Mammary epithelial cell (primary cell): ENCODE measurements at regions of chr7 and their contacts with region 1.

Region 1: GRCh38 chr7:106461993-106462859 is 177.4 kb upstream of the NAMPT start:
- DNase-seq: peak; percentile 50
- H3K4me3 ChIP-seq: no peak overlapping the region
- H3K27ac ChIP-seq: no peak overlapping the region
- H3K4me1 ChIP-seq: peaks cover 22% of the 10 kb centered on the region
- H3K27me3 ChIP-seq: no peaks in the 10 kb centered on the region
- CTCF ChIP-seq: peak; percentile 39 to 52

Region 2: DNA sequence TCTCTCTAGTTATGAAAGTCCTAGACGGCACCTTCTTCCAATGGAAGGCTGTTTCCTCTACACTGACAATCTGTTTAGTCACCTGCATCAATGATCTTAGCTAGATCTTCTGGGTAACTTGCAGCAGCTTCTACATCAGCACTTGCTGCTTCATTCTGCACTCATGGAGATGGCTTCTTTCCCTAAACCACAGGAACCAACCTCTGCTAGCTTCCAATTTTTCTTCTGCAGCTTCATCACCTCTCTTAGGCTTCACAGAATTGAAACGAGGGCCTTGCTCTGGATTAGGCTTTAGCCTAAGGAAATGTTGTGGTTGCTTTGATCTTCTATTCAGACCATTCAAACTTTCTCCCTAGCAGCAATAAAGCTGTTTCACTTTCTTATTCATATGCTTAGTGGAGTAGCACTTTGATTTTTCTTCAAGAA is 202.1 kb before region 1 on chr7:
- CTCF ChIA-PET with region 1: no interaction called
- dilution Hi-C with region 1: no loop called
- in situ Hi-C with region 1: loop called in 1 of 2 experiments (anchors 10 kb)
- intact Hi-C with region 1: no loop called
- DNase-seq: no peak
- H3K4me3 ChIP-seq: no peak overlapping the region
- H3K27ac ChIP-seq: no peak overlapping the region
- H3K4me1 ChIP-seq: no peaks in the 10 kb centered on the region
- H3K27me3 ChIP-seq: no peaks in the 10 kb centered on the region
- CTCF ChIP-seq: no peak

Region 3: GRCh38 chr7:106285051-106285854 is 177.0 kb before region 1 on chr7:
- CTCF ChIA-PET with region 1: interaction called, 7 read pairs
- dilution Hi-C with region 1: no loop called
- in situ Hi-C with region 1: no loop called
- intact Hi-C with region 1: loop called (anchors 1 kb)
- DNase-seq: peak; percentile 100
- H3K4me3 ChIP-seq: peak overlapping the region; percentile 50 to 93 (median 60)
- H3K27ac ChIP-seq: peak overlapping the region; percentile 98
- H3K4me1 ChIP-seq: peaks cover 17% of the 10 kb centered on the region
- H3K27me3 ChIP-seq: no peaks in the 10 kb centered on the region
- CTCF ChIP-seq: no peak

Region 4: DNA sequence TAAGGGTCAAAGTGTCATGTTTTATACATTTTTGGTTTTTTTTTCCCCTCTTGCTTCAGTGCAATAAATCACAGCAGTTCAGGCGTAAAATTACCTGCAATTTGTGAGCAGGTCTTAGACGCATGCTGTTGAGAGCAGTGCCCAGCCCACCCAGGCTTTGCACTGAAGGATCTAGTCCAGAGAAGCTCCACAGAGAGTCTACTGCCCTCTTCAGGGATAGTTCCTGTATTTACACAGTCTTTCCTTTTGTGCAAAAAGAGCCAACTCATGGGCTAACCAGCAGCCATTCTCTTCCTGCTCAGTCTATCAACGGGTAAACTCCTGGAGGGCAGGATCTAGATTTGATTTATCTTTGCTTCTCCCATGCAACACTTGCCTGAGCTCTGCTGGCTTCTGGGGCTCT is 95.2 kb before region 1 on chr7:
- CTCF ChIA-PET with region 1: interaction called, 33 read pairs
- dilution Hi-C with region 1: no loop called
- in situ Hi-C with region 1: no loop called
- intact Hi-C with region 1: loop called (anchors 2 kb)
- DNase-seq: no peak
- H3K4me3 ChIP-seq: no peak overlapping the region
- H3K27ac ChIP-seq: no peak overlapping the region
- H3K4me1 ChIP-seq: peaks cover 3% of the 10 kb centered on the region
- H3K27me3 ChIP-seq: no peaks in the 10 kb centered on the region
- CTCF ChIP-seq: peak; percentile 17 to 51

Region 5: GRCh38 chr7:106392590-106392989 is 69.6 kb before region 1 on chr7:
- CTCF ChIA-PET with region 1: no interaction called
- dilution Hi-C with region 1: no loop called
- in situ Hi-C with region 1: no loop called
- intact Hi-C with region 1: no loop called
- DNase-seq: peak; percentile 43
- H3K4me3 ChIP-seq: no peak overlapping the region
- H3K27ac ChIP-seq: no peak overlapping the region
- H3K4me1 ChIP-seq: no peaks in the 10 kb centered on the region
- H3K27me3 ChIP-seq: no peaks in the 10 kb centered on the region
- CTCF ChIP-seq: no peak

Region 6: DNA sequence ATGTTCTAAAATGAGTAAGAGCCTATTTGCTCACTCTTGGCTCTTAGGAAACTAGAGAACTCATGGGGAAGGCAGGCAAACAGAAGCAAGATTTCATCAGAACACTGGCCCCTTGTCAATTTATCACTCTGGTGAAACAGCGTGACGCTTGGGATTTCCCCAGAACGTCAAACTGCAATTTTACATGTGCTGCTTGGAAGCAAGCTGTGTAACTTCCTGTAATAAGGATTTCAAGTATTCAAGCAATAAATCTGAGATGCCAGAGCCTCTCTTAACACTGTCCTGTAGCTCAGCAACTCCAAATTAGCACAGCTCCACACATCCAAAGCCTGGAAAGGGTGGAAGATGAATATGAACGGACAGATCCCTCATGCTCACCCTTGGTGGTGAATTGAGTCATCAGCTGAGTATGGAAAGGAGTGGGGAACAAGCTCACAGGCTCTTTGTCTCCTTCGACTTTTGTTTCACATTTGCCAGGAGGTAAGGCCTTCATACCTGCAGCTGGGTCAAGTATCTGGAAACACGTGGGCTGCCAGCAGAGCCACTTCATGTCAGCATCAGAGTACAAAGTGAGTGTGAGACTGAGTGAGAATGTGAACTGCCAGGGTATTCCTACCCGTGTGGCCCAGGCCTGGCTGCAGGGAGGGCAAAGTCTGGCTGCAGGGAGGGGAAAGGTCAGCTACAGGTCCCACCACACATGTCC is 37.1 kb before region 1 on chr7:
- CTCF ChIA-PET with region 1: interaction called, 5 read pairs
- dilution Hi-C with region 1: no loop called
- in situ Hi-C with region 1: no loop called
- intact Hi-C with region 1: loop called (anchors 1 kb)
- DNase-seq: peak; percentile 99
- H3K4me3 ChIP-seq: peak overlapping the region in 1 of 3 experiments; percentile 23
- H3K27ac ChIP-seq: peak overlapping the region; percentile 99
- H3K4me1 ChIP-seq: peaks cover 45% of the 10 kb centered on the region
- H3K27me3 ChIP-seq: no peaks in the 10 kb centered on the region
- CTCF ChIP-seq: no peak

Region 7: DNA sequence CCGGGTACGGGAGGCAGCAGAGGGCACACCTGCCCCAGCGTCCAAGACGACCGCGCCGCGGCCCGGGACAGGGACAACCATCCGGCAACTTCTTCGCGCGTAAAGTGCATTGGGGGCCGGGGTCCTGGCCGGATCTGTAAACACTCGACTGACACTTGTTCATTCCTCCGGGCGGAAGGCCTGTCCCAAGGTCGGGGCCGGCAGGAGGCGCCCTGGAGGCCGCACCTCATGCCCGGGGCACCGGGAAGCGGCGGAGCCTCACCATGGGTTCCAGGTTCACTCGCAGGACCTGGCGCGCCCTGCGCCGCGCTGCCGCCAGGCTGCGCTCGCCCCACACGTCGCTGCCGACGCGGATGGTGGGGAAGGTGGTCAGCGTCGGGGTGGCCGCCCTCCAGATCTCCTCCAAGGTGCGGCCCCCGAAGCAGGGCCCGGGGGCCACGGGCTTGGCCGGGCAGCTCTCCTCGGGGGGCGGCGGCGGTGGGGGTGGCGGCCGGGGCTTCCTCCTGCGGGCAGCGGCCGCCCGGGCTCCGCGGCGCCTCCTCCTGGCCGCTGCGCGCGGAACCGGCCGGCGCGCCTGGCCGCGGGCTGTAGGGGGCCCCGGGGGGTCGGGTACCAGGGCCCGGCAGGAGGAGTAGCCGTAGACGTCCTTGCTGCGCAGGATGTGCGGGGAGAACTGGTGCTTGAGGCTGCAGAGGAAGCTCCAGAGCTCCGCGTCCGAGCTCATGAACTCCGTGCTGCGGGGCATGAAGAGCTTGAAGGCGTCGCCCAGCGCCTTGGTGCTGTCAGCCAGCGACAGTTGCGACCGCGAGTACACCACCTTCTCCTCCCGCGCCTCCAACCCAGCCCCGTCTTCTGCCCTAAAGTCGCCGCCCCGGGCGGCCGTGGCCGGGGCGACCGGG is 198.0 kb after region 1 on chr7:
- CTCF ChIA-PET with region 1: no interaction called
- dilution Hi-C with region 1: no loop called
- in situ Hi-C with region 1: no loop called
- intact Hi-C with region 1: loop called (anchors 1 kb)
- DNase-seq: peak; percentile 74
- H3K4me3 ChIP-seq: peak overlapping the region; percentile 74 to 99 (median 90)
- H3K27ac ChIP-seq: peak overlapping the region; percentile 81
- H3K4me1 ChIP-seq: peaks cover 6% of the 10 kb centered on the region
- H3K27me3 ChIP-seq: no peaks in the 10 kb centered on the region
- CTCF ChIP-seq: peak; percentile 75 to 93

Region 8: DNA sequence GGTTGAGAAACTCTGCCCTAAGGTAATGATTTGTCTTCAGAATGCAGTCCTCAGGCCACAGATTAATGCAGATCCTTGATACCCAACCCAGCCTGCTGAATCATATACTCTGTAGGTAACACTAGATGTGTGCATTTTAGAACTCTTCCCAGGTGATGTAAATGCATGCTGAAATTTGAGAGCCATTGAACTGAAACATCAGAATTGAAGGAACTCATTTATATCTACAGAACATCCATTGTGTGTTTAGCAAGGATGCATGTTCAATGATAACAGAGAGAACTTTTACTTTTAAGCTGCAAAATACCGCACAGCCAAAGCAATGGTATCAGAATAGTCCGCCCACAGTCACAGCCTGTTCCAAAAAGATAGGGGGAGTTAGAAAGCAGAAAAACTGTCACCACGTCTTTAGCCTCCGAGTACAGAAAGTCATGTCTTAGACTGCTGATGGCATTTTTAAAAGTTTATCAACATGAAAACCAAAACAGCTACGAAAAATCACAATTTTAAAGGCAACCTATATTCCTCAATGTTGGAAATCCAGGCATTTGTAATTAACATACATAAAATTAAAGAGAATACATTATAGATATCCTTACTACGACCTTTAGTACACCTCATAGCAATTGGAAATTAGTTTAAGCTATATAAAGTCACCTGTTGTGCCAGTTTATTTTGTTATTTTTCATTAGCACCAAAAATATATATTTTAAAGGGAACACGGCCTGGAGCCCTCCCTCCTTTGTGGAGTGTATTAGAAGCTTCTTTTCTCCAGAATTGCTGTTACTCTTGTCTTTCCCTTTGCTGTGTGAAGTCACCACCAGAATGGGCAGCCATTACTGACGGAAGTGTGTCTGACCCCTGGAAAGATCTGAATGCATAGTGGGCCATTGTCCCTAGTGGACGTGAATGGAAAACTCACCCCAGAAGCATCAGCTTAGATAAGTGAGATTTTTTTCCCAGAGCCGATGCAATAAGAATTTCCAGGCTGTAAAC is 516.5 kb after region 1 on chr7:
- CTCF ChIA-PET with region 1: no interaction called
- dilution Hi-C with region 1: no loop called
- in situ Hi-C with region 1: no loop called
- intact Hi-C with region 1: no loop called
- DNase-seq: no peak
- H3K4me3 ChIP-seq: no peak overlapping the region
- H3K27ac ChIP-seq: no peak overlapping the region
- H3K4me1 ChIP-seq: no peaks in the 10 kb centered on the region
- H3K27me3 ChIP-seq: no peaks in the 10 kb centered on the region
- CTCF ChIP-seq: no peak